Activated T-helper 2 cell treated with anti-CD3 and anti-CD28 coated beads, Interferon-gamma antibody, Interleukin-2, Interleukin-4, amounts not matched to agents 10 μg/mL and 5 μg/mL and 100 μg/mL, durations not matched to agents 14 hours and 24 hours and 36 hours (primary cell): ENCODE measurements at regions of chr4 and their contacts with region 1.

Region 1: GRCh38 chr4:55948726-55949474 is at the start of gene CEP135:
- DNase-seq: peak; percentile 91
- H3K4me3 Mint-ChIP-seq: peak within 1 kb of the TSS; percentile 83
- H3K27ac Mint-ChIP-seq: peak within 1 kb of the TSS; percentile 93
- H3K4me1 Mint-ChIP-seq: peaks cover 30% of the 10 kb centered on the region
- H3K27me3 Mint-ChIP-seq: no peaks in the 10 kb centered on the region
- total RNA-seq, gene CEP135: 13.3 and 15.7 TPM in 2 replicates

Region 2: DNA sequence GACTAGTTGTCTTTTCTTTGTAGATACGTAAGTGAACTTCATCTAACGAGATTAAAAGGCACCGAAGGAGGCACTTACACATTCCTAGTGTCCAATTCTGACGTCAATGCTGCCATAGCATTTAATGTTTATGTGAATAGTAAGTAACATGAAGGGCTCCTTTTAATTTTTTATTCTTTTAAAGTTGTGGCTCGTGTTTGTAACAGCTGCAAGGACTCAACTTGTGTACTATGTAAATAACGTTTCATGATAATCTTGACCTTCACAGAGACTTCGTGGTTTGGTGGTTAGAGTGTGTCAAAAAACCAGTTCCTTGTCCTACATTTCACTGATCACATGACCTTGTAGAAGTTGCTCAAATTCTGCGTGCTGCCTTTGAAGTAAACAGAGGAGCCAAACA is 1239.5 kb before region 1 on chr4:
- intact Hi-C with region 1: no loop called
- DNase-seq: no peak
- H3K4me3 Mint-ChIP-seq: no peak overlapping the region
- H3K27ac Mint-ChIP-seq: no peak overlapping the region
- H3K4me1 Mint-ChIP-seq: peaks cover 4% of the 10 kb centered on the region
- H3K27me3 Mint-ChIP-seq: peaks cover 2% of the 10 kb centered on the region

Region 3: DNA sequence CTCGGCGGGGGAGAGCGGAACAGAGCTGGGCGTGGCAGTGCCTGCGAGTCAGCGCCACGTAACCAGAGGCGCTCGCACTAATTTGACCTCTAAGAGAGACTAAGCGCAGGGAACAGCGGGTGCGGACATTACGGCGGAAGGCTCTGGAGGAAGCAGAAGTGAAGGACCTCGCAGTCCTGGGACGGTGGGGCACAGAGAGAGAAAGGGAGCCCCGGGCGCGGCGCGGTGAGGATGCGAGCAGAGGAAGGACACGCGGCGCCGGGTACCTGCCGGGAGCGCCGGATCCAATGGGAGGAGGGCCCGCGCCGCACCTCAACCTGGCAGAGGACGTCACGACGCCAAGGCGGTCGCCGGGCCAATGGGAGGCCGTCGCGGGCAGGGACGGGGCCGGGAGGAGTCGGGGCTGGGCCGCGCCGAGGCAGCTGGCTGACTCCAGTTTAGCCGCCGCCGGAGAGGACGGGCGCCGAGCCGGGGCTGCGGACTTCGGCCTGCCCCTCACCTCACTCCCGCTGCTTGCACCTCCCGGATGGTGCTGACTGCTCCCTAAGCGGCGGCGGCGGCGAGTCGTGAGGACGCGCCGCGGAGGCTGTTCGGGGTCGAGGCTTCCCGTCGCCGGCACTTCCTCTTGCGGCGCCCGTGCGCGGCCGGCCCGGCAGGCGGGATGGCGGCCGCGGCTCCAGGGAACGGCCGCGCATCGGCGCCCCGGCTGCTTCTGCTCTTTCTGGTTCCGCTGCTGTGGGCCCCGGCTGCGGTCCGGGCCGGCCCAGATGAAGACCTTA is 553.2 kb before region 1 on chr4 and contains the start of gene TMEM165:
- intact Hi-C with region 1: loop called (anchors 5 kb)
- DNase-seq: peak; percentile 86
- H3K4me3 Mint-ChIP-seq: peak within 1 kb of the TSS; percentile 98
- H3K27ac Mint-ChIP-seq: peak within 1 kb of the TSS; percentile 97
- H3K4me1 Mint-ChIP-seq: peaks cover 31% of the 10 kb centered on the region
- H3K27me3 Mint-ChIP-seq: no peaks in the 10 kb centered on the region
- total RNA-seq, gene TMEM165: 89.3 and 91.4 TPM in 2 replicates

Region 4: GRCh38 chr4:55906999-55907398 is 41.9 kb before region 1 on chr4:
- intact Hi-C with region 1: loop called (anchors 1 kb)
- DNase-seq: no peak
- H3K4me3 Mint-ChIP-seq: no peak overlapping the region
- H3K27ac Mint-ChIP-seq: peak overlapping the region; percentile 46
- H3K4me1 Mint-ChIP-seq: peaks cover 24% of the 10 kb centered on the region
- H3K27me3 Mint-ChIP-seq: no peaks in the 10 kb centered on the region

Region 5: DNA sequence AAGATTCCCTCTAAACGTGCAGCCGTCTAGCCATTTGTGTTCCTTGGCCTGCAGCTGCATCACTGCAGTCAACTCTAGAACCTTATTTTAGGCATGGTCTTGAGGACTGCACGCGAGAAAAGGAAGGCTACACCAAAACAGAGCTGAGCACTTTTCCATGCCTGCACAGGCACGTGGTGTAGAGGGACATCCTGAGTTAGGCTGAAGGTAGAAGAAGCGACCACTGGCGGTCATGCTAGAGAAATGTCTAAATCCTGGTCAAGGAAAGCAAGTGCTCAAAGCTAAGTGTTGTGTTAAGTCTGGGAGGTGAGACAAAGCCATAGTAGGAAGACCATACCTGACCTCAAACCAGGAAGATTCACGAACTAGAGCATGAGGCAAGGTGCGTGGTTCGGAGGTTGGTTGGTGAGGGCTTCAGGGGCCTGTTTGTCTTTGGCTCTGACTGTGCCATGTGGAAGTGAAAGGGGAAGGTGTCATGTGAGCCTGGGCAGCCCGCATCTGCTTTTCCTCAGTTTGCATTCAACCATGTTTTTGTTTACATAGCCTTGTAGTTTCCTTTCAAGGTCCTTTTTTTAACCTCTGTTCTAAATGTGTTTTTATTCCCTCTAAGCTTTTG is 234.6 kb after region 1 on chr4:
- intact Hi-C with region 1: loop called (anchors 5 kb)
- DNase-seq: no peak
- H3K4me3 Mint-ChIP-seq: no peak overlapping the region
- H3K27ac Mint-ChIP-seq: no peak overlapping the region
- H3K4me1 Mint-ChIP-seq: peaks cover 21% of the 10 kb centered on the region
- H3K27me3 Mint-ChIP-seq: peaks cover 1% of the 10 kb centered on the region

Region 6: DNA sequence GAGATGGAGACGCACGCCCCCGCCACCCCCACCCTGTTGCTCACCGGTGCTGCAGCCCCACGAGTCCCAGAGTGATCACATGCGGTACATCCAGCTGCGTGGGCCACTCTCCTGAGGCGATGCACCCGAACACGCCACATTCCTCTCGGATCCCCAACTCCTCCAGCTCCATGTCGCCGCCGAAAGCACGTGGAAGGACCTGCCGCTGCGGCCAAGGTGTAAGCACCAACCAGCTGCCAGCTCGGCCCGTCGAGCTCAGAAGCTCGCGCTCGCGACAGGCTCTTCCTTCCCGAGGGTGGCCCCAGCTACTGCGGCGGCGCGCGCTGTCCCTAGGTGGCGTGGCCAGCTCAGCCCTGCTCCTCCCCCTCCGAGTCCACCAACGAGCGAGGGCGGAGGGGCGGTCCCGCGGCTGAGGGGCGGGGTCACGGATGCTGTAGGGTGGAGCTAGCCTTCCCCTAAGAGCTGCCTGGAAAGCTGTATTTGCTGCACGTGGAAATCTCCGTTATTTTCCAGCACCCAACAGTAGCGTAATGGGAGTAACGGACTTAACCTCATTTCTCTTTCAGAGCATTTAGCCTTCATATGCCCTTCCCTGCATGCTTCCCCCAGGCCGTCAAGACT is 486.5 kb after region 1 on chr4 and contains the start of gene PPAT:
- intact Hi-C with region 1: loop called (anchors 2 kb)
- DNase-seq: peak; percentile 97
- H3K4me3 Mint-ChIP-seq: peak within 1 kb of the TSS; percentile 98
- H3K27ac Mint-ChIP-seq: peak within 1 kb of the TSS; percentile 98
- H3K4me1 Mint-ChIP-seq: peaks cover 44% of the 10 kb centered on the region
- H3K27me3 Mint-ChIP-seq: no peaks in the 10 kb centered on the region
- total RNA-seq, gene PPAT: 43.4 and 46.2 TPM in 2 replicates